ENCODE measurements at regions of chr20 and their contacts with region 1.

Region 1: GRCh38 chr20:13784893-13785715 is at the starts of genes ESF1 and NDUFAF5:
- DNase-seq: peak; percentile 95
- ATAC-seq: peak; percentile 95
- H3K4me3 Mint-ChIP-seq: peak within 1 kb of the TSS; percentile 82
- H3K27ac Mint-ChIP-seq: peak within 1 kb of the TSS; percentile 89
- H3K4me1 Mint-ChIP-seq: peaks cover 53% of the 10 kb centered on the region
- H3K27me3 Mint-ChIP-seq: no peaks in the 10 kb centered on the region
- total RNA-seq, gene ESF1: 22.0 to 23.1 TPM
- total RNA-seq, gene NDUFAF5: 22.0 to 24.3 TPM

Region 2: DNA sequence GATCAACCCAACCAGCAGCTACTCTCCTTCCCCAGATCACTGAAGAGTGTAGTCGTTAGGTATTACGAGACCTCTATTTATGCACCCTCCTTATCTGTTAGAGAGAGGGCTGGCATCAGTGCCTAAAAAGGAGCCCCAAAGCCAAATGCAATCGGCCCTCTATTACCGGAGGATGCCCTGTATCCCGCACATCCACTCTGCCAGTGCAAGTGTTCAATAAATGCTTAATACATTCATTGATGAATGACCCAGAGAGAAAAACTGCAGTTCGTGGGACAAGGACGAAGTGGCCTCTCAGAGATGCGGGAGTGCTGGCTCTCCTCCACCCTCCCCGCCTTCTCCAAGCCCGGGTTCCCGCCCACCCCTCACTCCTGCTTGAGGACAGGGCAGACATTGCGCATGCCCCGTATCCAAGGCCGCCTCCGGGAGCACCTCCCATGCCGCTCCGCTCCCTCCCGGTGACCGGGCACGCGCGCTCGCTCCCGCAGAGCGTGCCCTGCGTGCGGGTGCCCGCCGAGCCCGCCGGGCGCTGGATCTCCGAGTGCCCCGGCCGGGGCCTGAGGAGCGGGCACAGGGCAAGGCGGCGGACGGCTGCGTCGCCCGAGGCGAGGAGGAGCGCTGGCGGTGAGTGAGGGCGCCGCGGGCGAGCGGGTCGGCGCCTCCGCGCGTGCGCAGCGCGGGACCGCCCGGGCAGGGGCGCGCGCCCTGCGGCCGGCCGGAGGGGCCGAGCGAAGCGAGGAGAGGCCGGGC is 1894.6 kb before region 1 on chr20:
- CTCF ChIA-PET with region 1: no interaction called
- POLR2A ChIA-PET with region 1: no interaction called
- intact Hi-C with region 1: loop called in 1 of 2 experiments (anchors 10 kb)
- DNase-seq: peak; percentile 86
- ATAC-seq: peak; percentile 77
- H3K4me3 Mint-ChIP-seq: peak overlapping the region; percentile 76
- H3K27ac Mint-ChIP-seq: peak overlapping the region; percentile 51
- H3K4me1 Mint-ChIP-seq: peaks cover 13% of the 10 kb centered on the region
- H3K27me3 Mint-ChIP-seq: peaks cover 12% of the 10 kb centered on the region

Region 3: DNA sequence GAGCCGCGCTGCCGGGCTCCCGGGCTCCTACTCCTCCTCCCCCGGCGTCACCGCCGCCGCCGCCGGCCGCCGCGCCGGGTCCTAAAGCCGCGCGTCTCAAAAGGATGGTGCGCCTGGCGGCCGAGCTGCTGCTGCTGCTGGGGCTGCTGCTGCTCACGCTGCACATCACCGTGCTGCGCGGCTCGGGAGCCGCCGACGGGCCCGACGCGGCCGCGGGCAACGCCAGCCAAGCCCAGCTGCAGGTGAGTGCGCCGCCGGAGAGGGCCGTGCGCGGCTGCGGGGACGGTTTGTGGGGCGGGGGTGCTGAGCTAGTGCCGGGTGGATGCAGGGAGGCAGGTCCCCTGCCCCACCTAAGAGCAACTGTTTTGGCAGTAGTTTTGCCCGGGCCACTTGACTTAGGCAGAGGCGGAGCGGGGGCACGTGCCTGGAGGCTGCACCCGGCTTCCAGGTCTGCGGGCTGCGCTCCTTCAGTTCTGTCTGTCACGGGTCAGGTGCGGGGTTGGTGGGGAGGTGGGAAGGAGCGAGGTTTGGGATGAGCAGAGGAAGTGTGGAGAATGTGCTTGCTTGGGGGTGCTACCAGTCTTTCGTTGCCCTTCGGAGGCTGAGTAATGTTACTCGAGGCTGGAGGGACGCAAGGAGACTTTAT is 563.3 kb before region 1 on chr20:
- CTCF ChIA-PET with region 1: no interaction called
- POLR2A ChIA-PET with region 1: no interaction called
- intact Hi-C with region 1: loop called in 1 of 2 experiments (anchors 5 kb)
- DNase-seq: peak; percentile 82
- ATAC-seq: peak; percentile 87
- H3K4me3 Mint-ChIP-seq: peak overlapping the region; percentile 74
- H3K27ac Mint-ChIP-seq: peak overlapping the region; percentile 37
- H3K4me1 Mint-ChIP-seq: peaks cover 17% of the 10 kb centered on the region
- H3K27me3 Mint-ChIP-seq: peaks cover 36% of the 10 kb centered on the region

Region 4: GRCh38 chr20:13638496-13639222 is 146.4 kb before region 1 on chr20 and contains the start of gene TASP1:
- CTCF ChIA-PET with region 1: no interaction called
- POLR2A ChIA-PET with region 1: no interaction called
- intact Hi-C with region 1: loop called (anchors 1 kb)
- DNase-seq: peak; percentile 97
- ATAC-seq: peak; percentile 99
- H3K4me3 Mint-ChIP-seq: peak within 1 kb of the TSS; percentile 87
- H3K27ac Mint-ChIP-seq: peak within 1 kb of the TSS; percentile 85
- H3K4me1 Mint-ChIP-seq: peaks cover 16% of the 10 kb centered on the region
- H3K27me3 Mint-ChIP-seq: peaks cover 4% of the 10 kb centered on the region
- total RNA-seq, gene TASP1: 8.5 to 10.1 TPM

Region 5: GRCh38 chr20:13650474-13650873 is 134.6 kb before region 1 on chr20:
- CTCF ChIA-PET with region 1: no interaction called
- POLR2A ChIA-PET with region 1: no interaction called
- intact Hi-C with region 1: no loop called
- DNase-seq: no peak
- ATAC-seq: no peak
- H3K4me3 Mint-ChIP-seq: no peak overlapping the region
- H3K27ac Mint-ChIP-seq: no peak overlapping the region
- H3K4me1 Mint-ChIP-seq: no peaks in the 10 kb centered on the region
- H3K27me3 Mint-ChIP-seq: peaks cover 11% of the 10 kb centered on the region

Region 6: DNA sequence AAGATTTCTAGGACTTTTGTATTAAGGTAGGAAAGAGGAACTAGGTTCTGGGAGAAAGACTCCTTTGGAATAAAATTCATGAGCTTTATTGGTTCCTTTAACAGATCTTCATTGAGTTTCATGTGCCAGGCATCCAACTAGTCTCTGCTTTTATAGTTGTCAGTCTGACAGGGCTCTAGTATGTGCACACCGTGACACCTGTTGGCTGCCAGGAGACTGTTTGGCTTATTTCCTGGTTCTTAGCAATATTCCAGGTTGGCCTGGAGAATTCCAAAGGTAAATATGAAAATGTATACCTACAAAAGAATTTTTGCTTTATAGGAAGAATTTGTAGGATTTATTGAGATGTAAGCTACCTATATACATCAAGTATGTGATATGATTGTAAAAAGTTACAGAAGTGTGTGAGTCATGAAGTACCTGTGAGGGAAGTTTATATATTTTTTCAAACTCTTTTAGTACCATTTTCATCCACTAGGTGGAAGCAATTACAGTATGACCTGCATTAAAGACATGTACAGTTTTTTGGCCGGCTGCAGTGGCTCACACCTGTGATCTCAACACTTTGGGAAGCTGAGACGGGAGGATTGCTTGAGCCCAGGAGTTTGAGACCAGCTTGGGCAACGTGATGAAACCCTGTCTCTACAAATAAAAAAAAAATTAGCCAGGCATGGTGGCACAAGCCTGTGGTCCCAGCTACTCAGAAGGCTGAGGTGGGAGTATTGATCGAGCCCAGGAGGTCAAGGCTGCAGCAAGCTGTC is 35.0 kb after region 1 on chr20:
- CTCF ChIA-PET with region 1: interaction called, 6 read pairs
- POLR2A ChIA-PET with region 1: no interaction called
- intact Hi-C with region 1: loop called (anchors 2 kb)
- DNase-seq: peak; percentile 28
- ATAC-seq: peak; percentile 67
- H3K4me3 Mint-ChIP-seq: no peak overlapping the region
- H3K27ac Mint-ChIP-seq: no peak overlapping the region
- H3K4me1 Mint-ChIP-seq: peaks cover 26% of the 10 kb centered on the region
- H3K27me3 Mint-ChIP-seq: no peaks in the 10 kb centered on the region

Measured in activated CD4-positive, alpha-beta T cell treated with anti-CD3 and anti-CD28 coated beads for 36 hours (primary cell).